ENCODE measurements at regions of chr4 and their contacts with region 1.

Region 1: GRCh38 chr4:81471588-81472288 is at the start of gene RASGEF1B:
- H3K4me3 Mint-ChIP-seq: peak within 1 kb of the TSS; percentile 95
- H3K27ac Mint-ChIP-seq: peak within 1 kb of the TSS; percentile 94
- H3K4me1 Mint-ChIP-seq: peaks cover 47% of the 10 kb centered on the region
- H3K27me3 Mint-ChIP-seq: no peaks in the 10 kb centered on the region

Region 2: DNA sequence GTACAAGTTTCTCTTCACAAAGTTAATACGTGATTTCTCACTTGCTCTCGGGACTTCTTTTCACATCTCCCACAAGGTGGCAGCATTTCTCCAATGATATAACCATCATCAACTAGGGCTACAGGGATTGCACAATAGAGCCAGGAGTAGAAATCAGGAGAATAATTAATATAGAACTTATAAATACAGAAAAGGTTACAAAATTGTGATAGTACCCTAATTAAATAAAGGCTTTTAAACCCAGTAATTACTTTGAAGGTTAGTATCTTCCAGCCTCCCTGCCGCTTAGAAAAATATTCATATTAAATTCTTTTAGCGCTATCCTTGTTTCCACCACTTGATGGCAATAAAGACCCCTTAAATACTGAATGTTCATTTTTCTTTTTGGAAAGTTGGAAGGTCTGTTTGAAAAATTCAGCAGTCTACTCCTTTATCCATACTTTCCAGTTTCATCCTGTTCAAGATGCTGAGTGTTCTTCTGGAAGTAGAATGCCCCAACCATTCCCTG is 65.8 kb before region 1 on chr4:
- intact Hi-C with region 1: loop called (anchors 1 kb)
- H3K4me3 Mint-ChIP-seq: no peak overlapping the region
- H3K27ac Mint-ChIP-seq: no peak overlapping the region
- H3K4me1 Mint-ChIP-seq: peaks cover 6% of the 10 kb centered on the region
- H3K27me3 Mint-ChIP-seq: peaks cover 2% of the 10 kb centered on the region

Region 3: GRCh38 chr4:81491943-81492342 is 20.2 kb after region 1 on chr4:
- intact Hi-C with region 1: loop called (anchors 1 kb)
- H3K4me3 Mint-ChIP-seq: no peak overlapping the region
- H3K27ac Mint-ChIP-seq: peak overlapping the region; percentile 82
- H3K4me1 Mint-ChIP-seq: peaks cover 25% of the 10 kb centered on the region
- H3K27me3 Mint-ChIP-seq: no peaks in the 10 kb centered on the region

Region 4: GRCh38 chr4:81523672-81524327 is 52.1 kb after region 1 on chr4:
- intact Hi-C with region 1: no loop called
- H3K4me3 Mint-ChIP-seq: no peak overlapping the region
- H3K27ac Mint-ChIP-seq: no peak overlapping the region
- H3K4me1 Mint-ChIP-seq: no peaks in the 10 kb centered on the region
- H3K27me3 Mint-ChIP-seq: no peaks in the 10 kb centered on the region

Region 5: DNA sequence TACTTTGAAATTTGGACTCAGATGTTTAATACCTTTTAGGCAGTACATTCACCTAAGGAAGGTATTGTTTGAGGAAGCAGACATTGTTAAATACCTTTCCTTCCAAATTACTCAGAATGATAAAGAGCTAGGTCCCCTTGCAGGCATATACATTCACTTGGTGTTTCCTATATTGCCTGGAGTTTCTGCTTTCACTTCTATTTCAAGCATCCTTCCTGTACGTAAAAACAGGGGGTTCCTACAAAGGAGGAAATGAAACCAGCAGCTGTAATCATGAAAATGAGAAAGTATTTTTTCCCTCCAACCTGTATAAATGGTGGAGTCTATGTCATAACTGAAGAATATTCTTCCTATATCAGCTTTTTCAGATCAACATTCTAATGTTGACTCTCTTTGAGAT is 90.4 kb after region 1 on chr4:
- intact Hi-C with region 1: loop called (anchors 5 kb)
- H3K4me3 Mint-ChIP-seq: no peak overlapping the region
- H3K27ac Mint-ChIP-seq: no peak overlapping the region
- H3K4me1 Mint-ChIP-seq: peaks cover 14% of the 10 kb centered on the region
- H3K27me3 Mint-ChIP-seq: peaks cover 4% of the 10 kb centered on the region

Region 6: DNA sequence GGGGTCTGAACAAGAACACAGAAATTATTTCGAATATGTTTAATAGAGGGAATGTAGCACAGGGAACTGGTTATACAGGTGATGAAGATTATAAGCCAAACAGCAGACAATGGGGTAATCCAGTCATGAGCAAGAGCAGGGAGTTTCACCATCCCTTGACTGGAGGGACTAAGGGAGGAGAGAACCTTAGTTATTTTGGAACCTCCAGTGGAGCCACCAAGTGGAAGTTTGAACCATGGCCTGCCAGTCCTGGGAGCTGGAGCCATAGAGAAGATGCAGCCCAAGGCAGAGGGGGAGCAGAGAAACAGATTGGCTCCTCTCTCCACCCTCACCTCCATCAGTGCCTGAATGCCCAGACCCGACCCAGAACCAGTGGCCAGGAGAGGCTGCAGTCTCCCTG is 264.6 kb after region 1 on chr4:
- intact Hi-C with region 1: loop called (anchors 10 kb)
- H3K4me3 Mint-ChIP-seq: no peak overlapping the region
- H3K27ac Mint-ChIP-seq: no peak overlapping the region
- H3K4me1 Mint-ChIP-seq: peaks cover 18% of the 10 kb centered on the region
- H3K27me3 Mint-ChIP-seq: peaks cover 2% of the 10 kb centered on the region

Region 7: DNA sequence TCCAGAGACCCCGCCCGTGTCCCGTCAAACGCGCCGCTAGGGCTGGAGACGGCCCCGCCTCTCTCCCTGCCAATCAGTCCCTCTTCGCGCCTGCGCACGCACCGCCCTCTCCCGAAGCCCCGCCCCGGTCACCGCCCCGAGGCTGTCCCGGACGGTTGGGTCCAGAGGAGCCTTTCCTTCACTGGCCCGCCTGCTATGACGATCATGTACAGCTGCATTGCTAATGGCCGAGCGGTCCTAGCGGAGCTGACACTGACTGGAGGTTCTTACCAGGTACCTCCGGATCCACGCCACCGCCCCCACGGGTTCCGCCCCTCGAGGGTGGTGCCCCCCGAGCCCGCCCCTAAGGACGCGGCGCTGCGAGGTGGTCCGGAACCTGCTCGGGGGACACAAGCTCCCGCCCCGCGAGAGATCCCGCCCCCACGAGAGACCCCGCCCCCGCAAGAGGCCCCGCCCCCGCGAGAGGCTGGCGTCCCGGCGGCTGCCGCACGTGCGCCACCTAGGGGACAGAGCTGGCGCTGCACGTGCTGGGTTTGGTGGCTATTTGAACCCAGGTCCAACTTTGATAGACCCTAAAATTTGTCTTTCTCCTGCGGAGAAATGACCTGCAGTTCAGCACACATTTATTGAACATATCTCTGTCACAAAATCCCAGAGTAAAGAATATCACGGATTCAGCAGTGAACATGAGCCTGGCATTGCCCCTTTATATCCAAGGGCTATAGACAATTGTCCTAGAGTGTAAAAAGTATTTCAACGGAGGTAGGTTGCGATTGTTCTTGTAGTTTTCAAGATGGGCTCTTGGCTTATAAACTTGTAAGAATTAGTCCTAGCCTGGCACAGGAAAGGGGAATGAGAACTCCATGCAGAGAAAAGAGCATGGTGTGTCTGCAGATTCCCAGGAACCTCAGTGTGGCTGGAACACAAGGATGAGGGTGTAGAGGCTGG is 813.4 kb after region 1 on chr4:
- intact Hi-C with region 1: loop called (anchors 10 kb)
- H3K4me3 Mint-ChIP-seq: peak overlapping the region; percentile 67
- H3K27ac Mint-ChIP-seq: peak overlapping the region; percentile 57
- H3K4me1 Mint-ChIP-seq: peaks cover 14% of the 10 kb centered on the region
- H3K27me3 Mint-ChIP-seq: peaks cover 20% of the 10 kb centered on the region